AG04450 (cell line): ENCODE measurements at regions of chr18 and their contacts with region 1.

Region 1: GRCh38 chr18:21740724-21741510 is at the start of gene MIB1:
- DNase-seq: peak; percentile 90
- H3K4me3 ChIP-seq: peak within 1 kb of the TSS; percentile 90
- H3K27ac ChIP-seq: peak within 1 kb of the TSS; percentile 97
- H3K27me3 ChIP-seq: no peaks in the 10 kb centered on the region
- CTCF ChIP-seq: no peak
- polyA plus RNA-seq, gene MIB1: 20.9 and 25.3 TPM in 2 replicates

Region 2: GRCh38 chr18:21704603-21705364 is 36.1 kb before region 1 on chr18 and contains the start of gene ABHD3:
- CTCF ChIA-PET with region 1: no interaction called
- POLR2A ChIA-PET with region 1: interaction called, 15 read pairs
- DNase-seq: peak; percentile 62
- H3K4me3 ChIP-seq: peak within 1 kb of the TSS; percentile 85
- H3K27ac ChIP-seq: peak within 1 kb of the TSS; percentile 39
- H3K27me3 ChIP-seq: no peaks in the 10 kb centered on the region
- CTCF ChIP-seq: peak; percentile 45
- polyA plus RNA-seq, gene ABHD3: 3.9 and 5.7 TPM in 2 replicates